HCT116 (cell line): ENCODE measurements at regions of chr6 and their contacts with region 1.

Region 1: DNA sequence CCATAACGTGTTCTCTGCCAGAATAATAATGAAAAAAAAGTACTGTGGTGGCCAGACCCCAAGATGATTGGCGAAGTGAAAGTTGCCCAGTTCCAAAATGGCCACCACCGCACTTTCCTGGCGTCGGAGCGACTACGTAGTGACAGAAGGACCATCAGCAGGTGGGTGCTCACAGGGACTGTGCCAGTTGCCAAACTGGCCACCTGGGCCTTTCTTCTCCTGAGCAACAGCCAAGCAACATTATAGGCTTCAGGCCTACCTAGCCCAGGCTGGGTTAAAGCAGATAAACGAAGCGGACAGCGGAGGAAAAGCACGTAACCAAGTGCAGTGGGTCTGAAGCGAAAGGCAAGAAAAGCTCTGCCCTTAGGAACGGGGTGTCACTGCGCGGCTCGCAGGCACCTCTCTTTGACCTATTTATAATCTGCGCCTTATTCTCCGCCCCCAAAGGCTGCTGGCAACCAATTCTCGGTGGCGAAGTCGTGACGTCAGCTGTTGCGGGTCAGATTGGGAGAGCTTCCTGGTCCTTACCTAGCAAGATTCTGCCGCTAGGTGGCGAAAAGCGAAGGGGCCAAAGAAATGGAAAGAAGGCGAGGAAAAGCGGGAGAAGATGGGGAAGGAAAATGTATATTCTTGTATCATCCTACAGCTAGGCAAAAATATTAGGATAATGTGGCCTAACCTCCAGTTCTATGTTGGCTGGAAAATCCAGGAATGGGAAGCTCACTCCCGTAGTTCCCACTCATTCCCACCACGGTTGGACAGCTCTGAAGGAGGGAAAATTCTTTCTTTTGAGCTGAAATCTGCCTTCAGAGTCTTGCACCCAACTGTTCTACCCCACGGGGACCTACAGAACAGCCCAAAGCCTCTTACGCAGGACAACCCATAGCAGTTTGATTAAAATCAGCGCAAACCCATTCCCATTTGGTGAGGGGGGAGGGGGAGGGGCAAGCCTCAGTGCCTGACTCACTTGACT is 6.9 kb upstream of the MOG start:
- DNase-seq: peak; percentile 98
- ATAC-seq: peak; percentile 92
- H3K4me3 ChIP-seq: peak overlapping the region; percentile 46 to 54
- H3K27ac ChIP-seq: peak overlapping the region; percentile 54
- H3K4me1 ChIP-seq: peaks cover 6 to 15% of the 10 kb centered on the region in 2 experiments; a peak in 3 of 4 replicates
- H3K27me3 ChIP-seq: no peaks in the 10 kb centered on the region
- CTCF ChIP-seq: peak; percentile 75 to 91 (median 90)
- POLR2A ChIP-seq: peak; percentile 91
- RAD21 ChIP-seq: peak; percentile 27

Region 2: DNA sequence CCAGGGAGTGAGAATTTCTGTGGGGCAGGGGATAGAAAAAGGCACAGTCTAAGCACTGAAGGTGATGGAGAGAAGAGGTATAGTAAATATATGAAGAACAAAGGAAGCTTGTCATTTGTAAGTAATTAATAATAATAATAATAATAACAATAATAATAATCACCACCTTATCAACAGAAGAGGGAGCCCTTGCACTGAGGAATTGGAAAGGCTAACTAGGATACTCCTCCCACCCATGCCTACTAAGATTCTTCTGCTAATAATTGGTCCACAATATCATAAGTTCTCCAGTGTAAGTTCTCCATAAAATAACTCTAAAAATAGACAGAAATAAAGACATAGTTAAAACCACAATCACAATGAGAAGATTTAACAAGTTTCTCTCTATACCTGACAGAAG is 274.0 kb before region 1 on chr6:
- CTCF ChIA-PET with region 1: interaction called, 20 read pairs
- POLR2A ChIA-PET with region 1: no interaction called
- RAD21 ChIA-PET with region 1: no interaction called
- intact Hi-C with region 1: loop called (anchors 5 kb)
- DNase-seq: peak; percentile 19
- ATAC-seq: peak; percentile 73; the same call in 1 of the 2 replicates
- H3K4me3 ChIP-seq: no peak overlapping the region
- H3K27ac ChIP-seq: no peak overlapping the region
- H3K4me1 ChIP-seq: no peaks in the 10 kb centered on the region
- H3K27me3 ChIP-seq: no peaks in the 10 kb centered on the region
- CTCF ChIP-seq: peak in 2 of 3 experiments; percentile 17 to 49; a peak in 2 of 6 replicates
- POLR2A ChIP-seq: no peak
- RAD21 ChIP-seq: peak; percentile 58

Region 3: GRCh38 chr6:29490552-29490951 is 159.4 kb before region 1 on chr6:
- CTCF ChIA-PET with region 1: no interaction called
- POLR2A ChIA-PET with region 1: no interaction called
- RAD21 ChIA-PET with region 1: no interaction called
- intact Hi-C with region 1: no loop called
- DNase-seq: no peak
- ATAC-seq: no peak
- H3K4me3 ChIP-seq: no peak overlapping the region
- H3K27ac ChIP-seq: no peak overlapping the region
- H3K4me1 ChIP-seq: no peaks in the 10 kb centered on the region
- H3K27me3 ChIP-seq: peaks cover 8% of the 10 kb centered on the region; the same call in 1 of the 2 replicates
- CTCF ChIP-seq: no peak
- POLR2A ChIP-seq: no peak
- RAD21 ChIP-seq: no peak

Region 4: DNA sequence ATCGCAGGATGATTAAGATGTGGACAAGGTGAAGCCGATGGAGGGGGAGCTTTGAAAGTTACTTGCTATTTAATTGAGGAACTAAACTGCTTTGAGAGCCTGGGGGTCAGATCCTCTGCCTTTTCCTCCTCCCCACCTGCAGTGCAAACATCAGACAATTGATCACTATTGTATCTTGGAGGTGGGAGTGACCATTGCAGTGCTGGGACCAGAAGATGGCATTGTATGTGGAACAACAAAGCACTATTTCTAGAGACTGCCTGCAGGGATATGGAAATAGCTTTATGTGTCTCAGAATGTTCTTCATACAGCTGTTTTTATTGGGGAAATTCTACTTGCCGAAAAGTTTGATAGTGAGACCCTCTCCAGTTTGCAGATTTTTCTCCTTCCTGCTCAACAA is 11.1 kb after region 1 on chr6:
- CTCF ChIA-PET with region 1: interaction called, 70 read pairs
- POLR2A ChIA-PET with region 1: interaction called, 3 read pairs
- RAD21 ChIA-PET with region 1: no interaction called
- intact Hi-C with region 1: no loop called
- DNase-seq: no peak
- ATAC-seq: no peak
- H3K4me3 ChIP-seq: no peak overlapping the region
- H3K27ac ChIP-seq: no peak overlapping the region
- H3K4me1 ChIP-seq: no peaks in the 10 kb centered on the region
- H3K27me3 ChIP-seq: no peaks in the 10 kb centered on the region
- CTCF ChIP-seq: no peak
- POLR2A ChIP-seq: no peak
- RAD21 ChIP-seq: no peak

Region 5: GRCh38 chr6:29676981-29677601 is 27.1 kb after region 1 on chr6:
- CTCF ChIA-PET with region 1: interaction called, 21 read pairs
- POLR2A ChIA-PET with region 1: interaction called, 3 read pairs
- RAD21 ChIA-PET with region 1: interaction called in 1 of 2 experiments, 7 read pairs
- intact Hi-C with region 1: no loop called
- DNase-seq: no peak
- ATAC-seq: no peak
- H3K4me3 ChIP-seq: no peak overlapping the region
- H3K27ac ChIP-seq: no peak overlapping the region
- H3K4me1 ChIP-seq: peaks cover 0 to 7% of the 10 kb centered on the region in 2 experiments; a peak in 1 of 4 replicates
- H3K27me3 ChIP-seq: no peaks in the 10 kb centered on the region
- CTCF ChIP-seq: no peak
- POLR2A ChIP-seq: no peak
- RAD21 ChIP-seq: no peak

Region 6: DNA sequence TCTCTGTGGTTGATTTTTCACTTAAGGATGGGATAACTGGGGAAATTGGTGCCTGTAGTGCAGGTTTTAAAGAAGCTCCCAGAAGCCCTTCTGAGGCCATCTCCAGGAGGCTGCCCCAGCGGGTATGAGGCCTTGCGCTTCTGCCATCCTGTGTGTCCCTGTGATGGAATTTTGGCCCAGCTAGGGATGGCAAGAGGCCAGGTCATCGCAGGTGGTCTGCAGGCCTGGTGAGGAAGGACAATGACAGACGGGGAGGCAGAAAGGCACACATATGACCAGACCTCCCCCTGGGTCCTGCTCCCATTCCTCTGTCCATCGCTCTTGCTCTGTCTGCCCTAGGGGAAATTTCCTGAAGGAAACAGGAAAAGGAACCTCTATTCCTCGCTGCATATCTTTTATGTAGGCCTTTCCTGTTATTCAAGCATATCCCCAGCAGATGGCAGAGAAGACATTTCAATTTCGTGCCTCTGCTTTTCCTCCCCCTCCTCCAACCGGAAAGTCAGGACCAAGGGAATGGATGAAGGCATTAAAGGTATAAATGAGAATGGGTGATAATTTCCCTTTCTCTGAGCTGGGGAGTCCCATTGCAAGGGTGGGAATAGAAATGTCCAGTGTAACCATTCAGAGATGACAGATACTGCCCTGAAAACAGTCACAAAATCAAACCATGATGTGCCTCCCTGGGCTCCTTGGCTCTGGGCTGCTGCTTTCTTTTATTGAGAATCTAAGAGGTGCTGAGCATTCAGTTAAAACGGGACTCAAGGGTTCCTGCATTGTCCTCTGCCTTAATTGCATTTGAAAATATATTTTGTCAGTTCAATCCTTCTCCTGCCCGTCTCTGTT is 55.6 kb after region 1 on chr6:
- CTCF ChIA-PET with region 1: interaction called, 15 read pairs
- POLR2A ChIA-PET with region 1: no interaction called
- RAD21 ChIA-PET with region 1: no interaction called
- intact Hi-C with region 1: no loop called
- DNase-seq: peak; percentile 48
- ATAC-seq: peak; percentile 71
- H3K4me3 ChIP-seq: no peak overlapping the region
- H3K27ac ChIP-seq: no peak overlapping the region
- H3K4me1 ChIP-seq: peaks cover 0 to 3% of the 10 kb centered on the region in 2 experiments; a peak in 1 of 4 replicates
- H3K27me3 ChIP-seq: peaks cover 5% of the 10 kb centered on the region; the same call in 1 of the 2 replicates
- CTCF ChIP-seq: peak; percentile 64 to 83 (median 71); a peak in 5 of 6 replicates
- POLR2A ChIP-seq: no peak
- RAD21 ChIP-seq: peak; percentile 93